Posterior vena cava (tissue), 2 donors: ENCODE measurements at regions of chr9 and their contacts with region 1.

Region 1: GRCh38 chr9:4750023-4750673 is 9.1 kb upstream of the AK3 start:
- DNase-seq: no peak

Region 2: DNA sequence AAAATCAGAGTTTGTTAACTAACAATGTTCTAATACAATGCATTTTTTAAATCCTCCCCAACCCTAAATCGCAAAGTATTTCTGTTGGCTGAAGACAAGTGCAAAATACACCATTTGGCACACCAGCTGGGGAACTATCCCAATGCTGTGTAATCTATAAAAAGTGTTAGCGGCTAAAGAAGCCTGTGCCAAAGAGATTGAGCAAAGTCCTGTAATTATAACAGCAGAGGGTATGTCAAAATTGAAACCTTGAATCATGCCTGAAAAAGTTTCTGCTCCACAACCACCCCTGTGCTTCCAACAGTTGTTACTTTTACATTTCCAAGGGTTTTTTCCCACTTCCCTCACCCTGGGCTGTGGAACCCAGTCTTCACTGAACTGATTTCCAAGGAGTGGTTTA is 171.1 kb before region 1 on chr9:
- intact Hi-C with region 1: no loop called
- DNase-seq: no peak

Region 3: GRCh38 chr9:5122116-5122910 is 372.2 kb after region 1 on chr9:
- intact Hi-C with region 1: loop called in 1 of 2 experiments (anchors 10 kb)
- DNase-seq: no peak